PC-3 (cell line): ENCODE measurements at regions of chr6 and their contacts with region 1.

Region 1: DNA sequence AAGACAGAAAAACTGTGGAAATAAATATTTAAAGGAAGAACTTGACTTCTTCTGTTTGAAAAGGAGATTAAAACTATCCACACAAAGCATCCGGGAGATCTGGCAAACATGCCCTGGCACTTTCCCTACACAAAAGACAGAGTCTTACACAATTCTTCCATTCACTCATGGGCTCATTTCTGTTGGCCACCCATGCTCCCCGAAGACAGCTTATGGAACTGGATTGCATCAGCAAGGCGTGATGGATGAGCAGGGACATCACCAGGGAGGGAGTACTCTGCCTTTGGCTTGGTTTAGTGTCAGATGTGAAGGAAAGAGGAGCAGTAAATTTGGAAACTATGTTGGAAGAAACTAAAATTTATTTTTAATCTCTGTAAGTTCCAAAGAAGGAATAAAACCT is 379.3 kb downstream of the CD109 start:
- DNase-seq: no peak
- ATAC-seq: no peak
- H3K4me3 ChIP-seq: no peak overlapping the region
- H3K27ac ChIP-seq: no peak overlapping the region
- H3K4me1 ChIP-seq: peaks cover 23% of the 10 kb centered on the region
- H3K27me3 ChIP-seq: no peaks in the 10 kb centered on the region
- CTCF ChIP-seq: no peak

Region 2: DNA sequence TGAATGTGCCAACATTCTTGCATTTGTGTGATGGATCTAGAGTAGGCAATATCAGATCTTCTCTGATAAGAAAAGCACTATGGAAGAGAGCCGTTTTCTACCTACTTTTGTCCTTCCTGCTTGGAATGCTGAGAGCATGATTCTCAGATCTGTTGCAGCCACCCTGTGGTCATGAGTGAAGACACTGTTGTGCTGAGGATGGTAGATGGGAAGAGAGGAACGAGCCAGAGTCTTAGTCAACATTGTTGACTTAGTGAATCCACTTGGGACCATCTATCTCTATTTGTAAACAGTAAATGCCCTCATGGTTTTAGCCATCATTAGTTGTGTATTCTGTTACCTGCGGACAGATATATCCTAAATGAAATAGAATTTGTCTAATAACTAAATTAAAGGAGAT is 176.7 kb before region 1 on chr6:
- CTCF ChIA-PET with region 1: no interaction called
- POLR2A ChIA-PET with region 1: no interaction called
- intact Hi-C with region 1: no loop called
- DNase-seq: peak; percentile 43
- ATAC-seq: peak; percentile 53
- H3K4me3 ChIP-seq: no peak overlapping the region
- H3K27ac ChIP-seq: no peak overlapping the region
- H3K4me1 ChIP-seq: no peaks in the 10 kb centered on the region
- H3K27me3 ChIP-seq: no peaks in the 10 kb centered on the region
- CTCF ChIP-seq: 0 out of 2 replicates have a peak, but pooled peaks have one; percentile 14

Region 3: GRCh38 chr6:73985891-73986290 is 89.4 kb before region 1 on chr6:
- CTCF ChIA-PET with region 1: interaction called, 4 read pairs
- POLR2A ChIA-PET with region 1: no interaction called
- intact Hi-C with region 1: loop called (anchors 10 kb)
- DNase-seq: peak; percentile 50
- ATAC-seq: peak; percentile 80
- H3K4me3 ChIP-seq: no peak overlapping the region
- H3K27ac ChIP-seq: no peak overlapping the region
- H3K4me1 ChIP-seq: no peaks in the 10 kb centered on the region
- H3K27me3 ChIP-seq: no peaks in the 10 kb centered on the region
- CTCF ChIP-seq: peak; percentile 68

Region 4: DNA sequence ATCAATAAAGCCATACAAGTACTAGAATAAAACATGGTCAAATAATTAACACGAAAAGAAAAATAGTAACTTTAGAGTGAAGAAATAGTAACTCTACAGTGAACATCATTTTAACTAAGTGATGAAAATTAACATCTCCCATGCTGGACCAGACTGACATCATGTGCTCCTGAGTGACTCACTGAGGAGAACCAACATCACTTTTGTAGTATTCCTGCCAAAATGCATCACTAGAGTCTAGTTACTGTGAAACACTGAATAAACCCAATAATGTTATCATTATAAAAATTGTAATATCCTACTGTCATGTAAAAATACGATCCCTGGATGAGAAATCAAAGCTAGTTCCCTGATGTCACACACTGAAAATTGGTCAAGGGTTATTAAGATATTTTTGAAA is 18.0 kb before region 1 on chr6:
- CTCF ChIA-PET with region 1: no interaction called
- POLR2A ChIA-PET with region 1: no interaction called
- intact Hi-C with region 1: no loop called
- DNase-seq: no peak
- ATAC-seq: no peak
- H3K4me3 ChIP-seq: no peak overlapping the region
- H3K27ac ChIP-seq: no peak overlapping the region
- H3K4me1 ChIP-seq: 0 out of 2 replicates have a peak, but pooled peaks cover 3% of the 10 kb centered on the region
- H3K27me3 ChIP-seq: no peaks in the 10 kb centered on the region
- CTCF ChIP-seq: no peak